B cell (primary cell): ENCODE measurements at regions of chr3 and their contacts with region 1.

Region 1: GRCh38 chr3:25856902-25857518 is 67.1 kb downstream of the OXSM start:
- DNase-seq: peak; percentile 65
- ATAC-seq: peak; percentile 63
- H3K4me3 ChIP-seq: no peak overlapping the region
- H3K4me3 Mint-ChIP-seq: no peak overlapping the region
- H3K27ac ChIP-seq: no peak overlapping the region
- H3K27ac Mint-ChIP-seq: no peak overlapping the region
- H3K4me1 ChIP-seq: no peaks in the 10 kb centered on the region
- H3K4me1 Mint-ChIP-seq: no peaks in the 10 kb centered on the region
- H3K27me3 ChIP-seq: no peaks in the 10 kb centered on the region
- H3K27me3 Mint-ChIP-seq: no peaks in the 10 kb centered on the region
- CTCF ChIP-seq: peak; percentile 86

Region 2: GRCh38 chr3:25372167-25372566 is 484.8 kb before region 1 on chr3:
- CTCF ChIA-PET with region 1: no interaction called
- POLR2A ChIA-PET with region 1: no interaction called
- intact Hi-C with region 1: no loop called
- DNase-seq: no peak
- ATAC-seq: no peak
- H3K4me3 ChIP-seq: no peak overlapping the region
- H3K4me3 Mint-ChIP-seq: no peak overlapping the region
- H3K27ac ChIP-seq: no peak overlapping the region
- H3K27ac Mint-ChIP-seq: no peak overlapping the region
- H3K4me1 ChIP-seq: no peaks in the 10 kb centered on the region
- H3K4me1 Mint-ChIP-seq: no peaks in the 10 kb centered on the region
- H3K27me3 ChIP-seq: no peaks in the 10 kb centered on the region
- H3K27me3 Mint-ChIP-seq: no peaks in the 10 kb centered on the region
- CTCF ChIP-seq: no peak

Region 3: DNA sequence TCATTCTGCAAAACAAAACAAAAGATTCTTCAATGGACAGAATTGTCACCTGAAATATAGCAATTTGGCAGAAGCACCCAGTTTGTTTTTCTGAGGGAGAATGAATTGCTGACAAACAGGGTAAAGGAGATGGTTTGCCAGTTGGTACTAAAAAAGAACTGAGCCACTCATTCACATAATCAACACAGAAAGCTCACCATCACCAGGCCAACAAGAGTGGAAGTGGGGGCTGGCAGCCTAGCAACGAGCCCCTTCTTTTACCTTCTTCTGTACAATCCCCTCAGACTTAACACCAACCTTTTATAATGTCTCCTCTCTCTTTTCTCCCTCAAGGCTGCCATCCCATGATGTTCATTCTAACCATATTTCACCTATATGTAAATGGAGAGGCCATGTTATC is 198.2 kb before region 1 on chr3:
- CTCF ChIA-PET with region 1: interaction called, 46 read pairs
- POLR2A ChIA-PET with region 1: no interaction called
- intact Hi-C with region 1: loop called (anchors 1 kb)
- DNase-seq: no peak
- ATAC-seq: no peak
- H3K4me3 ChIP-seq: no peak overlapping the region
- H3K4me3 Mint-ChIP-seq: peak overlapping the region; percentile 36
- H3K27ac ChIP-seq: peak overlapping the region in 1 of 2 donors; percentile 37
- H3K27ac Mint-ChIP-seq: peak overlapping the region; percentile 35
- H3K4me1 ChIP-seq: peaks cover 36 to 76% of the 10 kb centered on the region in 2 donors
- H3K4me1 Mint-ChIP-seq: peaks cover 75% of the 10 kb centered on the region
- H3K27me3 ChIP-seq: no peaks in the 10 kb centered on the region
- H3K27me3 Mint-ChIP-seq: no peaks in the 10 kb centered on the region
- CTCF ChIP-seq: no peak

Region 4: DNA sequence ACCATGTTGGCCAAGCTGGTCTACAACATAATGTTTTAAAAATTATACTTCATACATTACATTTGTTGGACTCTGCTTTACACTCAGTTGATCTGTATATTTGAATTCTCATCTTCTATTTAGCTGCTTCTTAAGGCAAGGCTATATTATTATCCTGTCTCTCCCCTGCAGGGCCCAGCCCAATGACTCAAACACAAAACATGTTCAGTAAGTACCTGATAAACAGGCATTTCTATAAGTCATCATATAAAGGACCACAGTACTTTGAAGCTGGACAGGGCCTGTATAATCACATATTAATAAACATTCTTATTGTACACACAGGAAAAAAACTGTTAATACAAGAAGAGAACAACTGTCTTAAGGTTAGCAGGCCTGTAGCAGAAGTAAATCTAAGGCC is 110.0 kb before region 1 on chr3:
- CTCF ChIA-PET with region 1: interaction called, 6 read pairs
- POLR2A ChIA-PET with region 1: no interaction called
- intact Hi-C with region 1: loop called (anchors 10 kb)
- DNase-seq: no peak
- ATAC-seq: no peak
- H3K4me3 ChIP-seq: no peak overlapping the region
- H3K4me3 Mint-ChIP-seq: no peak overlapping the region
- H3K27ac ChIP-seq: no peak overlapping the region
- H3K27ac Mint-ChIP-seq: no peak overlapping the region
- H3K4me1 ChIP-seq: no peaks in the 10 kb centered on the region
- H3K4me1 Mint-ChIP-seq: peaks cover 2% of the 10 kb centered on the region
- H3K27me3 ChIP-seq: no peaks in the 10 kb centered on the region
- H3K27me3 Mint-ChIP-seq: no peaks in the 10 kb centered on the region
- CTCF ChIP-seq: no peak

Region 5: DNA sequence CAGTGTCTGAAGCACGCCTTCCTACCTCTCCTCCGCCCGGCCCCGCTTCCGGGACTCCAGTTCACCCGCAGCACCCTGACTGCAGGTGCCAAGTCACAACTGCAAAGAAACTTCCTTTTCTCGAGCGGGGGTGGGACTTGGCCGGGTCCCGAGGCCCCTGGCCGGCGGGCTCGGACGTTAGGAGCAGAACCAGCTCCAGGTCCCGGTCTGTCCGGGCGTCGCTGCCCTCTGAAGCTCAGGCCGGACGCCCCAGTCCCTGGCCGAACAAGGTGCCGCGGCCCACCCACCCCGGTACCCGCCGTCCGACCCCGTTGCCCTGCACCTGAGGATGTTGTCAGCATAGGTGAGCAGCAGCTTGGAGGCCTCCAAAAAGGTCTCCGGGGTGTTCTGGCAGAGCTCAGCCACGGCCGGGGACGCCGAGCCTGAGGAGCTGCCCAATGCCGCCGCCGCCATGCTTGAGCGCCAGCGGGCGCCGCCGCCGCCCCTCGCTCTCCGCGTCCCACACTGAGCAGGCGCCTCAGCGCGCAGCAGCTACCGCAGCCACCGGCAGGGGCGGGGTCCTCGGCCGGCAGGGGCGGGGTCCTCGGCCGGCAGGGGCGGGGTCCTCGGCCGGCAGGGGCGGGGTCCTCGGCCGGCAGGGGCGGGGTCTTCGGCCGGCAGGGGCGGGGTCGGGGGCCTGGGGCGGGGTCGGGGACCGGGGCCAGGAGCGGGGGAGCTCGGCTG is 73.9 kb before region 1 on chr3 and contains the start of gene NGLY1:
- CTCF ChIA-PET with region 1: interaction called, 6 read pairs
- POLR2A ChIA-PET with region 1: no interaction called
- intact Hi-C with region 1: loop called (anchors 1 kb)
- DNase-seq: peak; percentile 90
- ATAC-seq: peak; percentile 82
- H3K4me3 ChIP-seq: peak within 1 kb of the TSS; percentile 81 to 95 (median 86)
- H3K4me3 Mint-ChIP-seq: peak within 1 kb of the TSS; percentile 92
- H3K27ac ChIP-seq: peak within 1 kb of the TSS; percentile 94 to 97
- H3K27ac Mint-ChIP-seq: peak within 1 kb of the TSS; percentile 98
- H3K4me1 ChIP-seq: peaks cover 27 to 32% of the 10 kb centered on the region in 2 donors
- H3K4me1 Mint-ChIP-seq: peaks cover 48% of the 10 kb centered on the region
- H3K27me3 ChIP-seq: no peaks in the 10 kb centered on the region
- H3K27me3 Mint-ChIP-seq: no peaks in the 10 kb centered on the region
- CTCF ChIP-seq: no peak
- total RNA-seq, gene NGLY1: 144 and 145 TPM in 2 replicates

Region 6: DNA sequence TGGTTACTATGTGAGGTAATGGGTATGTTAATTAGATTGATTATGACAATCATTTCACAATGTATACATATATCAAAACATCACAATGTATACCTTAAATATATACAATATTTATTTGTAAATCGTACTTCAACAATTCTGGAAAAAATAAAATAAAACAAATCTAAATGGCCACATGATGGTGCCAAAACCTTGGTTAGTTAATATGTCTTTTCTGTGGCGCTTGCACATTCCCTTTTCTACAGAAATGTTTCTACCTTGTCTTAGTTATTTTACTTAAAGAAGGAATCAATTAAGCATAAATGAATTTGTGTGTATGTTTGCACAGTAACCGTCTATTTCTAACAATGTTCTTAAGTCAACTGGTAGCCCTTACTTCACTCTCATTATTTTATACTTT is 13.7 kb before region 1 on chr3:
- CTCF ChIA-PET with region 1: interaction called, 15 read pairs
- POLR2A ChIA-PET with region 1: no interaction called
- intact Hi-C with region 1: no loop called
- DNase-seq: no peak
- ATAC-seq: no peak
- H3K4me3 ChIP-seq: no peak overlapping the region
- H3K4me3 Mint-ChIP-seq: no peak overlapping the region
- H3K27ac ChIP-seq: no peak overlapping the region
- H3K27ac Mint-ChIP-seq: no peak overlapping the region
- H3K4me1 ChIP-seq: no peaks in the 10 kb centered on the region
- H3K4me1 Mint-ChIP-seq: no peaks in the 10 kb centered on the region
- H3K27me3 ChIP-seq: no peaks in the 10 kb centered on the region
- H3K27me3 Mint-ChIP-seq: peaks cover 3% of the 10 kb centered on the region
- CTCF ChIP-seq: no peak